IMR-90 (cell line): ENCODE measurements at regions of chr5 and their contacts with region 1.

Region 1: DNA sequence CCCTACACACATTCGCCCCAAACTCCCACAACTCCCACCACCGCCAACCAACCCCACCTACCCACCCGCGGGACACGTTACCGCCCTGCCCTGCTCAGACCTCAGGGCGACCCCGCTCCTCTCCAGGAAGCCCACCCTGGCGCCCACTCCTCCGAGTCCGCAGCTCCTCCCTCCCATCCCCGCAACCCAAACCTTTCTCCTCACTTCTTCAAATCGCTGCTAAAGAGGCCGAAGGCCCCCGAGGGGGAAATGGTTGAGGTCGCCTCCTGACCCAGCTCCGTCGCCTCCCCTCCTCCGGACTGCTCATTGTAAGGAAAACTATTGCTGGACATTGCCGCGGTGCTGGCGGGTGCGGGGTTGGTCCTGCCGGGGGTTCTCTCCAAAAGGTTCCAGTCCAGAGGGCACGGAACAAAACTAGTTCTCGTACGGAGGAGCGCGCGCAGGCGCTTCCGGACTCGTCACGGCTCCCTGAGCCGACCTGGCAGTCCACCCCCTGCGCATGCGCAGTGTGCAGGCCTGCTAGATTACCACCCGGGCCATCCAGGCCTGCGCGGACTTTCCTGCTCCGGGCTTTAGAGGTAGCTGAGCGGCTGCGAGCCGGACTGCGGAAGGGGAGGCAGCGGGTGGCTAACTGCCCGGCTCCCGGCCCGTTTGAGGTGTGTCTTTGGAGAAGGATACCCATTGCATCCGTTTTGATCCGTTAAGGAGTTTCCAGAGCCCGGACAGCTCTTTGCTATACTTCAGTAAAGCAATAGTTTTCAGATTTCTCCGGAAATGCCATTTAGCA is at the start of gene AP3B1:
- DNase-seq: peak; percentile 99
- ATAC-seq: peak; percentile 97
- H3K4me3 ChIP-seq: peak within 1 kb of the TSS; percentile 86
- H3K27ac ChIP-seq: peak within 1 kb of the TSS; percentile 94
- H3K4me1 ChIP-seq: peaks cover 3% of the 10 kb centered on the region
- H3K27me3 ChIP-seq: no peaks in the 10 kb centered on the region
- CTCF ChIP-seq: no peak
- POLR2A ChIP-seq: peak; percentile 87
- RAD21 ChIP-seq: no peak; the same call in 1 of the 2 replicates
- total RNA-seq, gene AP3B1: 59.0 and 67.8 TPM in 2 replicates

Region 2: GRCh38 chr5:78243639-78244038 is 50.8 kb before region 1 on chr5:
- CTCF ChIA-PET with region 1: no interaction called
- POLR2A ChIA-PET with region 1: no interaction called
- dilution Hi-C with region 1: no loop called
- in situ Hi-C with region 1: no loop called
- intact Hi-C with region 1: loop called (anchors 5 kb)
- DNase-seq: peak; percentile 88
- ATAC-seq: peak; percentile 97
- H3K4me3 ChIP-seq: no peak overlapping the region
- H3K27ac ChIP-seq: peak overlapping the region; percentile 27; the same call in 1 of the 2 replicates
- H3K4me1 ChIP-seq: peaks cover 5% of the 10 kb centered on the region
- H3K27me3 ChIP-seq: no peaks in the 10 kb centered on the region
- CTCF ChIP-seq: no peak
- POLR2A ChIP-seq: no peak
- RAD21 ChIP-seq: no peak

Region 3: GRCh38 chr5:78359831-78360673 is 65.6 kb after region 1 on chr5 and contains the start of gene SCAMP1:
- CTCF ChIA-PET with region 1: interaction called, 9 read pairs
- POLR2A ChIA-PET with region 1: no interaction called
- dilution Hi-C with region 1: no loop called
- in situ Hi-C with region 1: loop called (anchors 5 kb)
- intact Hi-C with region 1: loop called (anchors 1 kb)
- DNase-seq: peak; percentile 92
- ATAC-seq: peak; percentile 96
- H3K4me3 ChIP-seq: peak within 1 kb of the TSS; percentile 88
- H3K27ac ChIP-seq: peak within 1 kb of the TSS; percentile 89
- H3K4me1 ChIP-seq: no peaks in the 10 kb centered on the region
- H3K27me3 ChIP-seq: no peaks in the 10 kb centered on the region
- CTCF ChIP-seq: peak; percentile 38
- POLR2A ChIP-seq: peak; percentile 73; the same call in 1 of the 2 replicates
- RAD21 ChIP-seq: peak; percentile 40
- total RNA-seq, gene SCAMP1: 89.4 and 114 TPM in 2 replicates